ENCODE measurements at regions of chr6 and their contacts with region 1.

Region 1: DNA sequence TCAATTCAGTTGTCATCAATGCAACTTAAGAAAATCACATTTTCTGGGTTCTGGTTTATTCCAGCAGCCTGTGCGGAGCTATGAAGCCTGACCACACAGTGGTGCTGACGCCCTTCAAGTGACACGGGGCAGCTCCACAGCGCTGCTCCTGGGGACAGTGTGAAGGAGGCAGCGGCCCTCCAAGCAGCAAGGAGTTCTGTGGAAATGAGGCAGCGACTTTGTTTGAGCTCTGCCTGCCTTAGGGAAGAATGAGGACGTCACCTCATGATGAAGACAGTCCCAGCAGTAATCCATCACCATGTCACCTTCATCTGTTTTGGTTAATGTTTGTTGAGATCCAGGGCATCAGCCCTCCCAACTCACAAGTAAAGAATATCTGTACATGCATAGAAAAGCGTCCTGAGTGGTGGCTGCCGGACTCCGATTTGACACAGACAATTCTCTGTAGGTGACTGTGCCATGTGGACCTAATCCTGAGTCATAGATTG is 168.5 kb upstream of the UST start:
- DNase-seq: peak; percentile 61 to 75
- ATAC-seq: peak; percentile 97 to 100 (median 99)
- H3K4me3 ChIP-seq: no peak overlapping the region
- H3K27ac ChIP-seq: no peak overlapping the region
- H3K4me1 ChIP-seq: no peaks in the 10 kb centered on the region
- H3K27me3 ChIP-seq: peaks cover 0 to 11% (median 4%) of the 10 kb centered on the region in 7 donors
- CTCF ChIP-seq: peak; percentile 60 to 96 (median 81)

Region 2: DNA sequence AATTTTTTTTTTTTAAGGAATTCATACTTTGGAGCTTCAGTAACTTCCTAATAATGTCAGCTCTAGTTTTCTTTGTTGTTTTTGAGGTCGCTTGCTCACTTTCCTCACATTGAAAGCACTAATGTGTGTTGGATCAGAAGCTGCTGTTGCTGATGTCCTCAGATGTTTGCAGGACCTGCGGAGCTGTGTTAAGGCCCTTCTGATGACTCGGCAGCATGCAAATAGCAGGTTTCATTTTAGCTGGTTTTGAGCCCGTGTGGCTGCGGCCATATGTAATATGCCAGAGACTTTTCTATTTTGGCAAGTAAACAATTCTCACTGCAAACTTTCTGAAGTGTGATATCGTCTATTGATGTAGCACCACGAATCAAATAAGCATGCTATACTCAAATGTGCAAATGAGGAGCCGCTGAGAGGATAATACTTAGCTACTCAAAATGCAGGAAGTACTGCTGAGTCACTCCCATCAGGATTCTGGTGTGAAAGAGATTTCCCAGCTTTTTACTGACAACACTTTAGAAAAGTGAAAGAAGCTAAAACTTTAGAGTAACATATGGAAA is 47.8 kb before region 1 on chr6:
- intact Hi-C with region 1: no loop called
- DNase-seq: no peak
- ATAC-seq: peak in 7 of 8 donors; percentile 41 to 70 (median 59)
- H3K4me3 ChIP-seq: peak overlapping the region in 4 of 10 donors; percentile 6 to 27 (median 13)
- H3K27ac ChIP-seq: peak overlapping the region in 9 of 10 donors; percentile 12 to 69 (median 38)
- H3K4me1 ChIP-seq: peaks cover 0 to 43% (median 19%) of the 10 kb centered on the region in 9 donors
- H3K27me3 ChIP-seq: no peaks in the 10 kb centered on the region
- CTCF ChIP-seq: no peak

Region 3: DNA sequence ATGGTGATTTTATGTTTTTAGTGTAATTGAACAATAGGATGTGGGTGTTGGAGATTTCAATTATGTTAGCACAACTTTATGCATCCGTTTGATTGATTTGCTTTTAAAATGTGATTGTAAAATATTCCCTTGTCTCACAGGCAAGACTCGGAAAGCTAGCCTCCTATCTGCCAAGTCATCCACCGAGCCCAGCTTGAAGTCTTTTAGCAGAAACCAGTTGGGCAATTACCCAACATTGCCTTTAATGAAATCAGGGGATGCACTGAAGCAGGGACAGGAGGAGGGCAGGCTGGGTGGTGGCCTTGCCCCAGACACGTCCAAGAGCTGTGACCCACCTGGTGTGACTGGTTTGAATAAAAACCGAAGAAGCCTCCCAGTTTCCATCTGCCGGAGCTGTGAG is 34.7 kb before region 1 on chr6:
- intact Hi-C with region 1: no loop called
- DNase-seq: no peak
- ATAC-seq: no peak
- H3K4me3 ChIP-seq: no peak overlapping the region
- H3K27ac ChIP-seq: no peak overlapping the region
- H3K4me1 ChIP-seq: peaks cover 0 to 12% (median 4%) of the 10 kb centered on the region in 9 donors
- H3K27me3 ChIP-seq: no peaks in the 10 kb centered on the region
- CTCF ChIP-seq: no peak

Region 4: DNA sequence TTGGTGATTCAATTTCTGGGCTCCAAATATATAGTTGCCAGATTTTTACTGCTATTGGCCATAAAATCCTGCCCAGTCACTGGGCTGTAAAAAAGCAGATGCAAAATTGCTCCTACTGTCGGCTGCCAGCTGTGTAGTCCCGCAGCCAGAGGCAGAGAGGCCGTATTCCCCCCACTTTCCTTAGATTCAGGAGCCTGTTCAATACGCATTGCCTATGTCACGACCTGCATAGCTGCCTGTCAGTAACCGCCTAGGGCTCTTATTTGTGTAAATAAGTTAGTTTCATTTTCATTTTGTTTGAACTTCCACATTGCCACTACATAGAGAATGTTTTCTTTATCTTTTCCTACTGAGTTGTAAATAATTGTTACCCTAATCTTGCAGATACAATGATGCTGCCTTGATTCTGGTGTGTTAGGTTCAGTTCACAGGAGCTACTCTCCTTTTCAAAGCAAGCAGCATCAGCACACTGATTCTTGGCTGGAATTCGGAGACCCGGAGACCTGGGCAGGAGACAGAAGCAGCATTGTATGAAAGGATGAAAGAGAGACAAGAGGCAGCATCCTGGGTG is 122.5 kb after region 1 on chr6:
- intact Hi-C with region 1: loop called in 2 of 10 experiments (anchors 5 to 10 kb)
- DNase-seq: no peak
- ATAC-seq: peak in 5 of 8 donors; percentile 41 to 56 (median 52)
- H3K4me3 ChIP-seq: peak overlapping the region in 6 of 10 donors; percentile 27 to 45 (median 41)
- H3K27ac ChIP-seq: peak overlapping the region in 4 of 10 donors; percentile 15 to 80 (median 24)
- H3K4me1 ChIP-seq: peaks cover 0 to 21% (median 3%) of the 10 kb centered on the region in 9 donors
- H3K27me3 ChIP-seq: no peaks in the 10 kb centered on the region
- CTCF ChIP-seq: no peak

Region 5: GRCh38 chr6:148746363-148747144 is 168.3 kb after region 1 on chr6 and contains the start of gene UST:
- intact Hi-C with region 1: loop called in 2 of 10 experiments (anchors 5 to 10 kb)
- DNase-seq: peak; percentile 78 to 81
- ATAC-seq: peak; percentile 83 to 93 (median 88)
- H3K4me3 ChIP-seq: peak within 1 kb of the TSS; percentile 58 to 92 (median 72)
- H3K27ac ChIP-seq: peak within 1 kb of the TSS; percentile 71 to 88 (median 76)
- H3K4me1 ChIP-seq: peaks cover 0 to 25% (median 17%) of the 10 kb centered on the region in 9 donors
- H3K27me3 ChIP-seq: peaks cover 0 to 57% (median 15%) of the 10 kb centered on the region in 7 donors
- CTCF ChIP-seq: peak in 7 of 9 donors; percentile 22 to 70 (median 57)
- total RNA-seq, gene UST: 1.6 to 4.1 (median 2.2) TPM

Measured in heart right ventricle (tissue), 16 donors.